ENCODE measurements at regions of chr11 and their contacts with region 1.

Region 1: GRCh38 chr11:47847892-47848635 is at the start of gene NUP160:
- DNase-seq: peak; percentile 85 to 88 (median 86)
- H3K4me3 ChIP-seq: peak within 1 kb of the TSS; percentile 70 to 91
- H3K4me3 Mint-ChIP-seq: peak within 1 kb of the TSS; percentile 95 to 100 (median 99)
- H3K27ac ChIP-seq: peak within 1 kb of the TSS; percentile 97
- H3K27ac Mint-ChIP-seq: peak within 1 kb of the TSS; percentile 93 to 100 (median 99)
- H3K4me1 ChIP-seq: peaks cover 64% of the 10 kb centered on the region
- H3K4me1 Mint-ChIP-seq: peaks cover 31 to 72% (median 51%) of the 10 kb centered on the region in 4 donors
- H3K27me3 ChIP-seq: no peaks in the 10 kb centered on the region
- H3K27me3 Mint-ChIP-seq: no peaks in the 10 kb centered on the region
- total RNA-seq, gene NUP160: 57.6 to 62.2 TPM

Region 2: DNA sequence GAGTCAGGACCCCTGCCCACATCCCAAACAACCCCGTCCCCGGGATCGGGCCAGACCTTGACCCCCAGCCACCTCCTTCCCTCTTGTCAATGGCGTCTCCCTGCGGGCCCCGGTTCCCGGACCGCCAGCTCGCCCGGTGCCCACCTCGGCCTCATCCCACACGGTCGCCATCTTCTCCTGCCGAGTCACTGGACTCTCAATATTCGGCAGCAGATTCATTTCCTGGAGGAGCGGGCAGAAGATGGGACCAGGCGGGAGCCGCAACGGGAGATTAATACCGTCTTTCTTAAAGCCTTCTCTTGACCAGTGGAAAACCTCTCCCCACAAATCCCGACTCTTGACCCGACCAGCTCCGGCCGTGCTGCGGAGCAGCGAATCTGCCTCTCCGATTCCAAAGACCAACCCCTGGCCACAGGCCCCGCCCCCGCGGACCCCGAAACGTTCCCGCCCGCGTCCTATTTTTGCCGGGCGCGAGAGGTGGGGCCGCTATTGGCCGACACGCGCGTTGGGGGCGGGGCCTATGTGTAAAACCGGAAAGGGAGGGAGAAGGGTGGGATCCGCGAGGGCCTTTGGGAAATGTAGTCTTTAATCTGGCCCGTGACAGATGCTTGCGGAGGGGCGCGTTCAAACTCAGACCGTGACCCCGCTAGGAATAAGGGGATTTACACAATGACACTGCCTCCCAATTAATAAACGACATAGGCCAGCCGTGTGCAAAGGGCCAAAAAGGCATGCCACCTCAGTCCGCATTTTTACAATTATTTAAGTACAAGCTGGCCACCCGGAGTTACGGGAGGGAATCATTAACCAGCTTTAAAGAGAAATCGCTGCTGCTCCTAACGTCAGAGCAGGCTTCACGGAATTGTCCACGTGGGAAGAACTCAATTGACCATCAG is 421.8 kb before region 1 on chr11 and contains the start of gene PSMC3:
- CTCF ChIA-PET with region 1: interaction called, 4 read pairs
- POLR2A ChIA-PET with region 1: no interaction called
- intact Hi-C with region 1: loop called (anchors 2 kb)
- DNase-seq: peak; percentile 94 to 97 (median 96)
- H3K4me3 ChIP-seq: peak within 1 kb of the TSS; percentile 64 to 91
- H3K4me3 Mint-ChIP-seq: peak within 1 kb of the TSS; percentile 99 to 100 (median 100)
- H3K27ac ChIP-seq: peak within 1 kb of the TSS; percentile 85
- H3K27ac Mint-ChIP-seq: peak within 1 kb of the TSS; percentile 92 to 99 (median 99)
- H3K4me1 ChIP-seq: peaks cover 18% of the 10 kb centered on the region
- H3K4me1 Mint-ChIP-seq: peaks cover 12 to 32% (median 22%) of the 10 kb centered on the region in 4 donors
- H3K27me3 ChIP-seq: no peaks in the 10 kb centered on the region
- H3K27me3 Mint-ChIP-seq: no peaks in the 10 kb centered on the region
- total RNA-seq, gene PSMC3: 53.9 to 59.6 TPM

Region 3: GRCh38 chr11:47642099-47642855 is 205.8 kb before region 1 on chr11 and contains the start of gene MTCH2:
- CTCF ChIA-PET with region 1: no interaction called
- POLR2A ChIA-PET with region 1: interaction called, 4 read pairs
- intact Hi-C with region 1: loop called (anchors 1 kb)
- DNase-seq: peak; percentile 95 to 96 (median 96)
- H3K4me3 ChIP-seq: peak within 1 kb of the TSS; percentile 86 to 90
- H3K4me3 Mint-ChIP-seq: peak within 1 kb of the TSS; percentile 82 to 98 (median 96)
- H3K27ac ChIP-seq: peak within 1 kb of the TSS; percentile 93
- H3K27ac Mint-ChIP-seq: peak within 1 kb of the TSS; percentile 84 to 99 (median 98)
- H3K4me1 ChIP-seq: peaks cover 23% of the 10 kb centered on the region
- H3K4me1 Mint-ChIP-seq: peaks cover 11 to 31% (median 18%) of the 10 kb centered on the region in 4 donors
- H3K27me3 ChIP-seq: no peaks in the 10 kb centered on the region
- H3K27me3 Mint-ChIP-seq: no peaks in the 10 kb centered on the region
- total RNA-seq, gene MTCH2: 23.6 to 23.9 TPM

Region 4: DNA sequence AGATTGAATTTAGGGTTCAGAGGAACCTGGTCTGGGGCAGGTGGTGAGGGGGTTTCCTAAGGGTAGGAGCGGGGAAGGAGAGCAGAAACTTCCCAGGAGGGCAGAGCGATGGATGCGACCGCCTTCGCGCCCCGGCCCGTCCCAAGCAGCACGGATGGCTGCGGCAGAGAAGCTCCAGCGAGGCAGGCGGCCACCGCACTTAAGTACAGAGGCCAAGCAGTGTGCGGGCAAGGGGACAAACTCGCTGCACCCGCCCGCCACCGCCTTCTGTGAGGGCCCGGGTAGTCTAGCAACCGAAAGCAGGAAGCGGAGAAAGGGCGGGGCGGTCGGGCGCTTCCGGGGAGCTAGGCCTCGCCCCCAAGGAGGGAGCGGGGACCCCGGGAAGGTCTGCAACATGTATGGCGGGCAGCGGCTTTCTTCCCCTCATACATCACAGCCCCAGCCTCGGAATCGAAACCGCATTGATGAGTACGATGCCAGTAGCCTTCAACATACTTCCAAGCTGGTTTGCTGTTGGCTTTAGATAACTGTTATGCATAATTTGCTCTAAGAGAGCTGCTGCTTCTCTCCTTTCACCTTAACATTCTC is 132.9 kb before region 1 on chr11 and contains the start of gene AGBL2:
- CTCF ChIA-PET with region 1: interaction called, 3 read pairs
- POLR2A ChIA-PET with region 1: interaction called, 7 read pairs
- intact Hi-C with region 1: loop called (anchors 5 kb)
- DNase-seq: peak; percentile 79 to 87 (median 80)
- H3K4me3 ChIP-seq: peak within 1 kb of the TSS; percentile 76 to 96
- H3K4me3 Mint-ChIP-seq: peak within 1 kb of the TSS; percentile 94 to 99 (median 98)
- H3K27ac ChIP-seq: peak within 1 kb of the TSS; percentile 92
- H3K27ac Mint-ChIP-seq: peak within 1 kb of the TSS; percentile 97 to 99 (median 98)
- H3K4me1 ChIP-seq: peaks cover 14% of the 10 kb centered on the region
- H3K4me1 Mint-ChIP-seq: peaks cover 7 to 25% (median 16%) of the 10 kb centered on the region in 4 donors
- H3K27me3 ChIP-seq: no peaks in the 10 kb centered on the region
- H3K27me3 Mint-ChIP-seq: no peaks in the 10 kb centered on the region
- total RNA-seq, gene AGBL2: 7.8 to 8.1 TPM

Region 5: DNA sequence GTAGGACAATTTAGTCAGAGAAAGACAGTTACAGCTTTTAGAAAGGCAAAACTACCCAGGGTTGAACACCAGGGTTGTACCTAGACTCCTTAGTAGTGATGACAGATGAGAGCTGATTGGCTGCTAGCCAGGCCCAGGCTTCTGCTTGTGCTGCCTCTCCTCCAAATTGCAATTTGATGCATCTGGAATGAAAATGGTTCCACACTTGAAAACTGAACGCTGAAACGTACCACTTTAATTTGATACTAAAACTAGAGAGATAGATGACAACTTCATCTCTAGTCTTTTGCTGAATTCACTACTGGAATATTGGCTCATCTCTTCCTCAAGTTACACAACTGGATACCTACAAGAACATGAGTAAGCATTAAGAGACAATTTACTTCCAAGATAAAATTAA is 61.7 kb before region 1 on chr11:
- CTCF ChIA-PET with region 1: no interaction called
- POLR2A ChIA-PET with region 1: no interaction called
- intact Hi-C with region 1: no loop called
- DNase-seq: no peak
- H3K4me3 ChIP-seq: no peak overlapping the region
- H3K4me3 Mint-ChIP-seq: no peak overlapping the region
- H3K27ac ChIP-seq: no peak overlapping the region
- H3K27ac Mint-ChIP-seq: peak overlapping the region in 1 of 7 donors; percentile 61
- H3K4me1 ChIP-seq: no peaks in the 10 kb centered on the region
- H3K4me1 Mint-ChIP-seq: no peaks in the 10 kb centered on the region
- H3K27me3 ChIP-seq: no peaks in the 10 kb centered on the region
- H3K27me3 Mint-ChIP-seq: no peaks in the 10 kb centered on the region

Region 6: DNA sequence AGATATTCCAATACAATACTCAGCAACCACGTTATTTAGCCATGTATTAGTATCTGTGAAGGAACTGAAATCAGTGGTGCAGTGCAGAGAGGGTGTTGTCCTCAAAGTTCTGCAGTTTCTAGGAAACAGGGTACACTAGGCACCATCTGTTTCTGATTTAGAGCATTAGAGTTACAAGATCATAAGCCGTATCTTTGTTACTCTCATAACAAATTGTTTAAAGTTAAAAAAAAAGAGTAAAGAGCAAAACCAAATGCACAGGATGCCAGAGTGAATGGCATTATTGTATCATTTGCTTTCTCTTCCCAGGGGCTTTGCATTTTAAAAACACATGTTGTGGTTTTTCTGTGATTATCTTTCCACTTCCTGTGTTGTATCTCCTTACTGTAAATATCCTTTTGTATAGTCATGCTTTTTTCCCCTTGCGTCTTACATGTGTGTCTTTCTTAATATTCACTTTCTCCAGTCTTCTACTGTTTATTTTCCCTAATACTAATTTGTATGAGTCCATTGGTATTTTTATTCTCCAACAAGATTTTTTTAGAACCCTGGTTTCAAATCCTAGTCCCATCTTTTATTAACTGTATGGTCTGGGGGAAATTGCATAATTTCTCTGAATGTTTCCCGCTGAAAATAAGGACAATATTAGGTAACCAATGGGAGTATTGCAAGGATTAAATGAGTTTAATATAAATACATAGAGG is 15.3 kb after region 1 on chr11:
- CTCF ChIA-PET with region 1: interaction called, 13 read pairs
- POLR2A ChIA-PET with region 1: interaction called, 5 read pairs
- intact Hi-C with region 1: loop called (anchors 1 kb)
- DNase-seq: peak in 4 of 5 donors; percentile 59 to 77 (median 74)
- H3K4me3 ChIP-seq: no peak overlapping the region
- H3K4me3 Mint-ChIP-seq: peak overlapping the region in 7 of 8 donors; percentile 17 to 73 (median 49)
- H3K27ac ChIP-seq: peak overlapping the region; percentile 30
- H3K27ac Mint-ChIP-seq: peak overlapping the region; percentile 14 to 80 (median 70)
- H3K4me1 ChIP-seq: peaks cover 43% of the 10 kb centered on the region
- H3K4me1 Mint-ChIP-seq: peaks cover 23 to 49% (median 39%) of the 10 kb centered on the region in 4 donors
- H3K27me3 ChIP-seq: no peaks in the 10 kb centered on the region
- H3K27me3 Mint-ChIP-seq: no peaks in the 10 kb centered on the region